T-cell (primary cell): ENCODE measurements at regions of chr11 and their contacts with region 1.

Region 1: DNA sequence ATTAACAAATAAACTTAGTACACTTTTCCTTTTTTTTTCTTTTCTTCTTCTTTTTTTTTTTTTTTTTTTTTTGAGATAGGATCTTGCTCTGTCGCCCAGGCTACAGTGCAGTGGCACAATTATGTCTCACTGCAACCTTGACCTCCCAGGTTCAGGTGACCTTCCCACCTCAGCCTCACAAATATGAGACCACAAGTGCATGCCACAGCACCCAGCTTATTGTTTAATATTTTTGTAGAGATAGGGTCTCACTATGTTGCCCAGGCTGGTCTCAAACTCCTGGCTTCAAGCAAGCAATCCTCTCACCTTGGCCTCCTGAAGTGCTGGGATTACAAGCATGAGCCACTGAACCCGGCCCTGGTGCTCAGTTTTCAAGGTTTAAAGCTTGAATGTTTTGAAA is 88.9 kb downstream of the ELP4 start:
- DNase-seq: no peak
- ATAC-seq: no peak
- H3K4me3 ChIP-seq: no peak overlapping the region
- H3K4me3 Mint-ChIP-seq: no peak overlapping the region
- H3K27ac ChIP-seq: no peak overlapping the region
- H3K27ac Mint-ChIP-seq: no peak overlapping the region
- H3K4me1 ChIP-seq: no peaks in the 10 kb centered on the region
- H3K4me1 Mint-ChIP-seq: no peaks in the 10 kb centered on the region
- H3K27me3 ChIP-seq: no peaks in the 10 kb centered on the region
- H3K27me3 Mint-ChIP-seq: no peaks in the 10 kb centered on the region

Region 2: GRCh38 chr11:31521497-31522150 is 76.8 kb before region 1 on chr11:
- CTCF ChIA-PET with region 1: no interaction called
- POLR2A ChIA-PET with region 1: interaction called, 5 to 12 read pairs
- DNase-seq: no peak
- ATAC-seq: no peak
- H3K4me3 ChIP-seq: no peak overlapping the region
- H3K4me3 Mint-ChIP-seq: no peak overlapping the region
- H3K27ac ChIP-seq: no peak overlapping the region
- H3K27ac Mint-ChIP-seq: no peak overlapping the region
- H3K4me1 ChIP-seq: no peaks in the 10 kb centered on the region
- H3K4me1 Mint-ChIP-seq: no peaks in the 10 kb centered on the region
- H3K27me3 ChIP-seq: no peaks in the 10 kb centered on the region
- H3K27me3 Mint-ChIP-seq: no peaks in the 10 kb centered on the region